Activated T-helper 1 cell treated with anti-CD3 and anti-CD28 coated beads, Interleukin-12 subunit alpha, Interleukin-12 subunit beta, Interleukin-2, Interleukin-4 antibody, amounts not matched to agents 30 ng/mL and 10 ng/mL and 1 ng/mL, durations not matched to agents 14 hours and 24 hours and 36 hours (primary cell): ENCODE measurements at regions of chr15 and their contacts with region 1.

Region 1: GRCh38 chr15:62742409-62743171 is 300.0 kb upstream of the TPM1 start:
- DNase-seq: no peak
- H3K4me3 Mint-ChIP-seq: no peak overlapping the region
- H3K27ac Mint-ChIP-seq: no peak overlapping the region
- H3K4me1 Mint-ChIP-seq: no peaks in the 10 kb centered on the region
- H3K27me3 Mint-ChIP-seq: no peaks in the 10 kb centered on the region

Region 2: DNA sequence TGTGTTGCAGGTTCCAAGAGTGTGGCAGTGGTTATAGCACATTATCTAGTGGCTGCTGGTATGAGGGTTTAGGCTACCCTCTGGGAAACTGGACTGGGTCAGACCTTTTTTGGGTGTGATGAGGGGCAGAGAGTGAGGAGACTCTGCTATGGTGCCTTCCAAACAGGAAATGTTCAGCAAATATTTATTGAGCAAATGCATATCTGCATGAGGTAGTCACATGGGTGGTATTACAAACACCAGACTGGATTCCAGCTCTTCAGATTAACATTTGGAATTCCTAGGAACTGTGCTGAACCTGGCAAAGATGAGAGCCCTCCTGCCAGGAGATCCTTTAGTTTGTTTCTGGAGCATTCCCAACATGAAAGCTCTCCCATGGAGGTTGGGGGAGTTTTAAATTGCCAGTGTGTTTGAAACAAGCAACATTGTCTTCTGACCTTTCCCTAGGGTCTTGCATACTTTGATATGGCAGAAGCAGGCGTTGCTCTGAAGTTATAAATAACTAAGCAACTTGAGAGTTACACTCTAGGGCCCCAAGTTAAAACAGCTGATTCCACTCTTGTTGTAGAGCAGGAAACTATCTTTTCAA is 236.3 kb before region 1 on chr15:
- intact Hi-C with region 1: loop called (anchors 5 kb)
- DNase-seq: no peak
- H3K4me3 Mint-ChIP-seq: no peak overlapping the region
- H3K27ac Mint-ChIP-seq: no peak overlapping the region
- H3K4me1 Mint-ChIP-seq: no peaks in the 10 kb centered on the region
- H3K27me3 Mint-ChIP-seq: peaks cover 4% of the 10 kb centered on the region